Activated B cell treated with CpG ODN at 0.5 μM for 24 hours (primary cell): ENCODE measurements at regions of chr22 and their contacts with region 1.

Region 1: DNA sequence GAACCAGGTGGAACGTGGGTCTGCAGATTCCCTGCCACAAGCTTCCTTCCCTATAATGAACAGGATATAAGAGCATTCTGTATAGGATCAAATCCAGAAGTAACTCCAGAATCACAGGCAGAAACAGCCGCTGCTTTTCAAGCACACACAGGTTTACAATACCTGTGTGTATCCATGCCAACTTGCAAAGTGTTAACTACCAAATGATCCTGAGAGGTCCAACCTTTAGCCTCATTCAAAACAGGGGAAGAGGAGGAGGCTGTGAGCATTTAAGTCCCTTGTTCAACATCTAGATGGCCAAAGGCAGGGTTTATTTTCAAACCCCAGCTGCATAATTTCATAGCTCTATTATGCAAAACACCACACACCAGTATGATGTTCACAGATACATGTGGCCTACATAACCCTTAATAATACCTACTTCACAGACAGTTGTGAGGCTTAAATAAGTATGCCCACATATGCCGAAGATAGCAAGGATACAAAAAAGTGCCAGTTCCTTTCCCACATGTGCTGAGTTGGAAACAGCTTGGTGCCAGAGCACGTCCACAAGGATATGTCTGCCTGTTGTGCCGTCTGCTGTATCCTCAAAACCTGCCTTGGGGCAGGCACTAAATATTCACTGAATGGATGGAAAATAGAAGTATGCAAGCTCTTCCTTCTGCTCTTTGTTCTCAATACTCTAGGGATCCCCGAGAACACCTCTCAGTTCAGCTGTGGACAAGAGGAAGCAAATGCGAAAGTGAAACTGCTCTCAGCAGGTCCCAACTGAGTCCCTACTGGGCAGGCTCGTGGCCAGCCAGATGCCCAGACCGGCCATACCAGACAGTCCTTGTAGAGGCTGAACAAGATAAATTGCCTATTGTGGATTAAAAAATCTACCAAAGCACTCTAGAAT is 66.8 kb downstream of the LARGE1 start:
- DNase-seq: peak; percentile 20
- ATAC-seq: peak; percentile 97
- H3K4me3 Mint-ChIP-seq: peak overlapping the region; percentile 84
- H3K27ac Mint-ChIP-seq: peak overlapping the region; percentile 88
- H3K4me1 Mint-ChIP-seq: peaks cover 32% of the 10 kb centered on the region
- H3K27me3 Mint-ChIP-seq: no peaks in the 10 kb centered on the region
- CTCF ChIP-seq: no peak

Region 2: GRCh38 chr22:33785283-33785968 is 68.0 kb before region 1 on chr22:
- CTCF ChIA-PET with region 1: no interaction called
- POLR2A ChIA-PET with region 1: no interaction called
- intact Hi-C with region 1: loop called (anchors 5 kb)
- DNase-seq: no peak
- ATAC-seq: no peak
- H3K4me3 Mint-ChIP-seq: no peak overlapping the region
- H3K27ac Mint-ChIP-seq: no peak overlapping the region
- H3K4me1 Mint-ChIP-seq: peaks cover 30% of the 10 kb centered on the region
- H3K27me3 Mint-ChIP-seq: no peaks in the 10 kb centered on the region
- CTCF ChIP-seq: no peak

Region 3: GRCh38 chr22:33841281-33842005 is 12.0 kb before region 1 on chr22:
- CTCF ChIA-PET with region 1: interaction called, 3 read pairs
- POLR2A ChIA-PET with region 1: interaction called, 3 read pairs
- intact Hi-C with region 1: loop called (anchors 1 kb)
- DNase-seq: no peak
- ATAC-seq: peak; percentile 74
- H3K4me3 Mint-ChIP-seq: peak overlapping the region; percentile 65
- H3K27ac Mint-ChIP-seq: peak overlapping the region; percentile 36
- H3K4me1 Mint-ChIP-seq: peaks cover 40% of the 10 kb centered on the region
- H3K27me3 Mint-ChIP-seq: no peaks in the 10 kb centered on the region
- CTCF ChIP-seq: no peak